Right cardiac atrium (tissue), 5 donors: ENCODE measurements at regions of chr6 and their contacts with region 1.

Region 1: GRCh38 chr6:7238900-7239589 is 74.0 kb downstream of the SSR1 start:
- DNase-seq: peak; percentile 89 to 96 (median 93)
- ATAC-seq: peak; percentile 74 to 75
- H3K4me3 ChIP-seq: no peak overlapping the region
- H3K27ac ChIP-seq: no peak overlapping the region
- H3K4me1 ChIP-seq: no peaks in the 10 kb centered on the region
- H3K27me3 ChIP-seq: no peaks in the 10 kb centered on the region

Region 2: DNA sequence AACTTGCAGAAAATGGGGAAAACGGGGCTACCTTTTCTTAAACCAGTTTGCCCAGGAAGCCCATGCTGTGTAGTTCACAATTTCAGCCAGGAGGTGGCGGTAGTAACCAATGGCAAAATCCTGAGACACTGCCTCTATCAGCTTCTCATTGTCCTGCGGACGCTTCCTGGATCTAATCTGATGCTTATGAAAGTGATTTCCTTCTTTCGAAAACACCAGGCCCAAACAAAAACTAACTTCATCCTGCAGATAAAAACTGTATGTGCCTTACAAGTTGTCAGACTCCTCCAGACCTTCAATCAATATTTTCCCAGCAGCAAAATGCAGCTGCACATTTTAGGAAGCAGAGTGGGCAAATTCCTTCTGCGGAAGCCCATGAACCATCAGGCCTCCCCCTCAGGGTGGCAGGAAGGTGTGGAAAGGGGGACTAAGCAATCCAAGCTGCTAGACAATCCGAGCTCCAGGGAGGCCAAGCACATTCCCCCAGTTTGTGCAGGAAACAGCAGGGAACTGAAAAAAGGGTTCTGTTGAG is 562.1 kb before region 1 on chr6:
- intact Hi-C with region 1: loop called in 3 of 4 experiments (anchors 5 kb)
- DNase-seq: peak; percentile 65 to 85 (median 76)
- ATAC-seq: peak; percentile 76 to 90
- H3K4me3 ChIP-seq: no peak overlapping the region
- H3K27ac ChIP-seq: peak overlapping the region; percentile 90
- H3K4me1 ChIP-seq: peaks cover 3% of the 10 kb centered on the region
- H3K27me3 ChIP-seq: no peaks in the 10 kb centered on the region

Region 3: DNA sequence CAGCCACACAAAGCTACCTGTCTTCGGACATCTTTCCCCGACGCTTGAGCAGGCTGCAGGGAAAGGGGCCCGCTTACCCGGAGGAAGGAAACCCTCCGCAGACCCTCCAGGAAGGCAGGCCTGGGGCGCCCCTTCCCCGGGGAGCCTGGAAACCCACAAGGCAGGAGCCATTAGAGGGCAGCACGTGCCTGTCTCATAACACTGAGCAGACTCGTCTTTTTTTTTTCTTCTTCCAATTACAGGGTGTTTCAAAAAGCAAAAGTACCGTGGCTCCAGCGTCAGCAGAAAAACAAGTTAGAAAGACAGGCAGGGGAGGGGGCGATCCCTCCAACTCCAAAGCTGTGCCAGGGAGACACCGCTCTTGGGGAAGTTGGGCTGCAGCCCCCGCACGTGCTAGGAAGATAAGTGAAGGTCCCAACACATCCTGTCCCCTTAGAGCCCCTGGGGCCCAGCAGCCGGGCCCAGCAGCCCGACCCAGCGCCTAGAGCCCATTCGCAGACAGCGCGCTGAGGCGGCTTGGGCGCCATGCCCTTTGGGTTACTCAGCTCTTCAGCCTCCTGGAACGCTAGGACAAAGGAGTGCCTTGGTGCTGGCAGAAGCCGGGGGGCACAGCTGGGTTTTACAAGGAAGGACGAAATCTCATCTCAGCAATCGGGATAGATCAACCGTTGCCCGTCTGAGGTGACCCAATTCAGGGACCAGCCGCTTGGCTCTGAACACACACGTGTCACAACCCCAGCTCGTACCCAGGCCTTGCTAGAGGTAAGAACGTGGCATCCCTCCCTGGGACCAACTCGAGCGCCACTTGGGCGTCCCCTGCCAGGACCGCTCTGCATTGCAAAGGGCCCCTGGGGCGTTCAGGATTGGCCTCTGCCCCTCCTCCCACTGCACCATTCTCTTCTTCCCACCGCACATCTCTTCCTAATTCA is 514.2 kb before region 1 on chr6:
- intact Hi-C with region 1: loop called (anchors 5 to 10 kb)
- DNase-seq: peak; percentile 78 to 94 (median 84)
- ATAC-seq: peak; percentile 88 to 90
- H3K4me3 ChIP-seq: peak overlapping the region; percentile 26
- H3K27ac ChIP-seq: peak overlapping the region; percentile 89
- H3K4me1 ChIP-seq: peaks cover 12% of the 10 kb centered on the region
- H3K27me3 ChIP-seq: no peaks in the 10 kb centered on the region

Region 4: GRCh38 chr6:6890400-6890858 is 348.6 kb before region 1 on chr6:
- intact Hi-C with region 1: loop called in 1 of 4 experiments (anchors 10 kb)
- DNase-seq: peak; percentile 49 to 86 (median 82)
- ATAC-seq: peak; percentile 72 to 81
- H3K4me3 ChIP-seq: no peak overlapping the region
- H3K27ac ChIP-seq: peak overlapping the region; percentile 40
- H3K4me1 ChIP-seq: peaks cover 12% of the 10 kb centered on the region
- H3K27me3 ChIP-seq: no peaks in the 10 kb centered on the region

Region 5: GRCh38 chr6:7112741-7113313 is 126.2 kb before region 1 on chr6:
- intact Hi-C with region 1: loop called in 2 of 4 experiments (anchors 10 kb)
- DNase-seq: peak in 2 of 3 donors; percentile 65 to 68
- ATAC-seq: no peak
- H3K4me3 ChIP-seq: no peak overlapping the region
- H3K27ac ChIP-seq: peak overlapping the region; percentile 4
- H3K4me1 ChIP-seq: peaks cover 14% of the 10 kb centered on the region
- H3K27me3 ChIP-seq: no peaks in the 10 kb centered on the region